Sigmoid colon (tissue), 7 donors: ENCODE measurements at regions of chr15 and their contacts with region 1.

Region 1: GRCh38 chr15:82849556-82850512 is 40.4 kb downstream of the WHAMM start:
- DNase-seq: peak; percentile 89
- H3K4me3 ChIP-seq: peak overlapping the region in 2 of 4 donors; percentile 28 to 35
- H3K27ac ChIP-seq: peak overlapping the region in 3 of 4 donors; percentile 23 to 62 (median 47)
- H3K4me1 ChIP-seq: peaks cover 0 to 15% (median 7%) of the 10 kb centered on the region in 4 donors
- H3K27me3 ChIP-seq: no peaks in the 10 kb centered on the region
- CTCF ChIP-seq: peak; percentile 62 to 67 (median 64)
- EP300 ChIP-seq: no peak
- POLR2A ChIP-seq: no peak

Region 2: DNA sequence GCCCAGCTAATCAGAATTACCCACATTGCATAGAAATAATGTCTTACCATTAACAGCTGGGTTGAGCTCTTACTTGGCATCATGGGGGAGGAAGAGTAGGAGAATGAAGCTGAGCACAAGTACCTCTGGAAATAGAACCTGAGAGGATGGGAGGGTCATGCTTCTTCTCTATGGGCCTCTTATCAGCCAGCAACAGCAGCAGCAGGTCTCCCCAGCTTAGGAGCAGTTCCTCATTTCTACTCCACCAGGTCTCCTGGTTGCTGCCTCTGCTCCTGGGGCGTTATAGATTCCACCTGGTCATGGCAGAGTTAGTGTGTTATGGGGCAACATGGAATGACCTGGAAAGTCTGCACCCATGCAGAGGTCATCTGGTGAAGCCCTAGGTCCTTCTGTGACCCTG is 47.3 kb before region 1 on chr15:
- intact Hi-C with region 1: no loop called
- DNase-seq: no peak
- H3K4me3 ChIP-seq: no peak overlapping the region
- H3K27ac ChIP-seq: no peak overlapping the region
- H3K4me1 ChIP-seq: no peaks in the 10 kb centered on the region
- H3K27me3 ChIP-seq: no peaks in the 10 kb centered on the region
- CTCF ChIP-seq: no peak
- EP300 ChIP-seq: no peak
- POLR2A ChIP-seq: no peak

Region 3: DNA sequence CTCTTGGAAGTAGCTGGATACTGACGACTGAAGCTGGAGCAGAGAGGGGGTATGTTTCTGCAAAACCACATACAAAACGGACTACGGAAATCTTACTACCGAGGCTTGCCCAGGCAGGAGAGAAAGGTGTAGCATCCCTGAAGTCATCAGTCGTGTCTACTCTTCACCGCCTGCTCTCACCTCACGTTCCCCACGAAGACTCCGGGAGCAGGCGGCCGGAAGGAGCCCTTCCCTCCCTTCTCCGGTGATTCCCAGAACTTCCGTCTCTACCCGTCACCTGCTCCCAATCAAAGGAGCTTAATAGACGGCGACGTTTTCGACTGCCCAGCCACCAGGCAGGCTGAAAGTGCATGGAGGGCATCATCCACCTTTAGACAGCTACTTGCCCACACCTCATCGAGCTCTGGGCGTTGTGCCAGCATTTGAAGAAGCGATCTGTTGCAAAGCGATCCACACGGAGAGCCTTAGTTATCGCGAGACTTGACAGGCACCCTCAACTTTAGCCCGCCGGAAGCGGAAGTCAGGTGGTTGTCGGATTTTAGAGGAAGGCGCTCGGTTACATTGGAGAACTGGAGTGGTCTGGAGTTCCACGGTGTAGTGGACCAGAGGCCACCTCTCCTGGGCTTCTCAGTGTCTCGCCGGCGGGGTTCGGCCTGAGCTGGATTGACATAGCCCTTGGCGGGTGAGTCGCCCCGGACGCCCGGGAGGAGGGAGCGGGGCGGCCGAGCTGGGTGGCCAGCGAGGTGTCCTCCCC is 136.0 kb after region 1 on chr15 and contains the start of gene RAMAC:
- intact Hi-C with region 1: loop called (anchors 5 kb)
- DNase-seq: peak; percentile 97
- H3K4me3 ChIP-seq: peak within 1 kb of the TSS; percentile 59 to 96 (median 76)
- H3K27ac ChIP-seq: peak within 1 kb of the TSS; percentile 72 to 80 (median 78)
- H3K4me1 ChIP-seq: peaks cover 0 to 23% (median 18%) of the 10 kb centered on the region in 4 donors
- H3K27me3 ChIP-seq: no peaks in the 10 kb centered on the region
- CTCF ChIP-seq: no peak
- EP300 ChIP-seq: no peak
- POLR2A ChIP-seq: peak in 1 of 2 donors; percentile 34
- total RNA-seq, gene RAMAC: 10.8 to 21.8 (median 19.2) TPM

Region 4: DNA sequence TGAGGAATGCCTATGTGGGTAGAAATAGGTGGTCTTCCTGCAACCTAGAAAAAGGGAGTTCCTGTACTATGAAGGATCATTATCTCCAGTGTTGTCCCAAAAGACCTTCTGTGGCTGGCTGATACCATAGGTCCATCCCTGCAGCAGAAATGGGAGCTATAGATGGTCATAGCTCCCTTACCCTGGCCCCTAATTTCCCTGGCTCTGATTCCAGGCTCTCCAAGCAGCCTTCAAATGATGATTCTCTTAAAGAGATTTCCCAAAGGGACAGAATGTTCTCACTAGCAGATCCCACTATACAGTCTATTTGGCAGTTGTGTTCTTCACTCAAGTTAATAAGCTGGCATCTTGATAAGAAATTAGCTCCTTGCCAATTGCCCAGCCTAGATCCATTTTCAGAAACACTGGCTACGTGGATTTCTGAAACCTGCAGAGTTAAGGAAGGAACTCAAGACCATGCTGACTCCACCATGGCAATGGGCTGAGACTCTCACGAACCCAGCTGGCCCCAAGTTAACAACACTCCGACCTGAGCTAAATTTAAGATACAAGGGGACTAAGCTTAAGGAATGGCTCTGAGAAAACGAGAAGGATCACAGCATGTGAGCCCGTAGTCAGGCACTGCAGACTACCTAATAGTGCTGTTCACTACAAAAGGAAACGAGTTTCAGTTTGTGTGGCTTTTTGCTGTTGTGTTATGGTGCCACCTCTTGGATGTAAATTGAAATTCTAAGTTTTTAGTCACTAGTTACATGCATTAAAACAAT is 150.3 kb after region 1 on chr15:
- intact Hi-C with region 1: loop called (anchors 5 kb)
- DNase-seq: no peak
- H3K4me3 ChIP-seq: peak overlapping the region in 3 of 4 donors; percentile 24 to 38 (median 24)
- H3K27ac ChIP-seq: peak overlapping the region in 3 of 4 donors; percentile 46 to 51 (median 49)
- H3K4me1 ChIP-seq: peaks cover 0 to 15% (median 9%) of the 10 kb centered on the region in 4 donors
- H3K27me3 ChIP-seq: no peaks in the 10 kb centered on the region
- CTCF ChIP-seq: peak in 2 of 4 experiments; percentile 15 to 33
- EP300 ChIP-seq: no peak
- POLR2A ChIP-seq: no peak

Region 5: DNA sequence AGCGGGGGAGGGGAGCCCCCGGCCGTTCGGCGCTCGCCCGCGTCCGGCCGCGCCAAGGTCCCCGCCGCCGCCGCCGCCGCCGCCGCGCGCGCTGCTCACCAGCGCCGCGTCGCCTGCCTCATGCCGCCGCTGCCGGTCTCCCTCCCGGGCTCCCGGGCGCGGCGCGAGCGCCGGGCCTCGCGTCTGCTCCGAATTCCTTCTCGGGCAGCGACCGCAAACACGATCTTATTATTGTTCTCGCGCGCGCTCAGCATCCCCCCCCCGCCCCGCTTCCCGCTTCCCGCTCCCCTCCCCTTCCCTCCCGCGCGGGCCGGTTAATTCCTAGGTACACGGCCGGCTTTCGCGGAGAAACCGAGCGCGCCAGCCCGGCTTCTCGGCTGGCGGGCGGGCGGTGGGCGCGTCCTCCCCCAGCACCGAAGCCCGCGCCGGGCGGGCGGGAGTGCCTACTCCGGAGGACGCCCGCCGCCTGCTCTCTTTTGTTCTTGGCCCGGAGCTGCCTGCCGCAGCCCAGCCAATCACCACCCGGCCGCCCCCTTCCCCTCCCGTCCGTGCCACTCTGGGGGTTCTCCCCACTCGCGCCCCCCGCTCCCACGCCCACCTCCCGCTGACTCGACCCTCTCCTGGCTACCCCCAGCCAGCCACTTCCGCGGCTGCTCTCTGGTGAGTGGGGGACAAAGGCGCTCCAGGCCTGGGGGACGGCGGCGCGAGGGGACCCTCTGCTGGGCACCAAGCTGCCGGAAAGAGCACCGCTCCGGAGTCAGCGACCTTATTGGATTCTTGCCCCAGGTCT is 358.0 kb after region 1 on chr15 and contains the start of gene HDGFL3:
- intact Hi-C with region 1: loop called (anchors 5 kb)
- DNase-seq: peak; percentile 81
- H3K4me3 ChIP-seq: peak within 1 kb of the TSS; percentile 82 to 96 (median 93)
- H3K27ac ChIP-seq: peak within 1 kb of the TSS; percentile 93 to 98 (median 96)
- H3K4me1 ChIP-seq: peaks cover 0 to 43% (median 31%) of the 10 kb centered on the region in 4 donors
- H3K27me3 ChIP-seq: no peaks in the 10 kb centered on the region
- CTCF ChIP-seq: no peak
- EP300 ChIP-seq: no peak
- POLR2A ChIP-seq: no peak
- total RNA-seq, gene HDGFL3: 58.0 to 83.6 (median 66.9) TPM